Activated CD4-positive, alpha-beta memory T cell treated with anti-CD3 and anti-CD28 coated beads for 36 hours (primary cell): ENCODE measurements at regions of chr3 and their contacts with region 1.

Region 1: DNA sequence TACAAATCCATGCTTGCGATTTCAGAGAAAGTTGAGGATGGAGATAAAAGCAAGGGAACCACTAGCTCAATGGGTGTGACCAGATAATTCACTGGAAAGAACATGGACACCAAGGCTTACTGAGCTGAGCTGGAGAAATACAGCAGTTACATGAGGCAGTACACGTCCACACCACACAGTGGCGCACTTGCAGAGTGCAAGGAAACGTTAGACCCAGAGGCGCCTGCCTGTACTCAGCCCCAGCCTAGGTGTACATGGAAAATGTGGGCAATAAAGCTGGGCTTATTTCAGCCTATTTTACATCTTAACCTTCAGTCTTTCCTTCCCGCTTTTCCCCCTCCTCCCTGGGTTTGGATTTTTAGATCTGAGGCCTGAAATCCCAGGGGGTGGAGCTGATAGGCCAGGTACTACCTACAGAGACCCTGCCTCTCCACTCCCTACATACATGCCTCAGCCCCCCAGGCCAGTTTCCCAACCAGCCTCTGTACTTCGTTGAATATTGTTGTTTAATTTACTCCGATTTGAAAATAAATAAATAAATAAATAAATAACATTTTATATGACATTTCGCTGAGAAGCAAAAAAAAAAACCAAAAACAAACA is 60.1 kb downstream of the PCOLCE2 start:
- DNase-seq: peak; percentile 85
- H3K4me3 Mint-ChIP-seq: no peak overlapping the region
- H3K27ac Mint-ChIP-seq: no peak overlapping the region
- H3K4me1 Mint-ChIP-seq: no peaks in the 10 kb centered on the region
- H3K27me3 Mint-ChIP-seq: peaks cover 13% of the 10 kb centered on the region

Region 2: DNA sequence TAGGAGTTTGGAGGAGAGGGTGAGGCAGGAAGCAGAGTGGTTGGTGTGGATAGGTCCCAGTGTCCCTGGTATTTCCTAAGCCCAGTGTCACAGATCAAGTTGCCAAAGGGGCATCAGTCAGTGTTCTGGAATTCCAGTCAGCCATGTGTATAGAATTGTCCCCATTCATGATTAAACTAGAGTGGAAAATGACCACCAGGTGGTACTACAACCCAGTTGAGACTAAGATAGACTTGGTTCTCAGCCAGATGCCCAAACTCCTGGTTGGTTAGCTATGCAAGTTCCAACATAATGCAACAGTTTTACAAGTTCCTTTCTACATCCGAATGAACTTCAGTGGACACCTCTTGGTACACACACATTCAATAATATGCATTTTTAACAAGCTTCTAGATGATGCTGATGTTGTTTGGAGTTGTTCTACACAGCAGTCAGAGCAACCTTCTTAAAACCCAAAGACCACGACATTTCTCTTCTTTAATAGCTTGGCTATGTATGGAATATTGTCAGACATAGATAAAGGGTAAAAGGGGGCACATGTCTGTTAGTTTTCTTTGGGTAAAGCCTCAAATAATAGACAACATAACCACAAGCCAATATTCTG is 241.9 kb before region 1 on chr3:
- CTCF ChIA-PET with region 1: interaction called, 4 read pairs
- POLR2A ChIA-PET with region 1: no interaction called
- intact Hi-C with region 1: loop called (anchors 2 kb)
- DNase-seq: no peak
- H3K4me3 Mint-ChIP-seq: no peak overlapping the region
- H3K27ac Mint-ChIP-seq: no peak overlapping the region
- H3K4me1 Mint-ChIP-seq: no peaks in the 10 kb centered on the region
- H3K27me3 Mint-ChIP-seq: peaks cover 4% of the 10 kb centered on the region

Region 3: DNA sequence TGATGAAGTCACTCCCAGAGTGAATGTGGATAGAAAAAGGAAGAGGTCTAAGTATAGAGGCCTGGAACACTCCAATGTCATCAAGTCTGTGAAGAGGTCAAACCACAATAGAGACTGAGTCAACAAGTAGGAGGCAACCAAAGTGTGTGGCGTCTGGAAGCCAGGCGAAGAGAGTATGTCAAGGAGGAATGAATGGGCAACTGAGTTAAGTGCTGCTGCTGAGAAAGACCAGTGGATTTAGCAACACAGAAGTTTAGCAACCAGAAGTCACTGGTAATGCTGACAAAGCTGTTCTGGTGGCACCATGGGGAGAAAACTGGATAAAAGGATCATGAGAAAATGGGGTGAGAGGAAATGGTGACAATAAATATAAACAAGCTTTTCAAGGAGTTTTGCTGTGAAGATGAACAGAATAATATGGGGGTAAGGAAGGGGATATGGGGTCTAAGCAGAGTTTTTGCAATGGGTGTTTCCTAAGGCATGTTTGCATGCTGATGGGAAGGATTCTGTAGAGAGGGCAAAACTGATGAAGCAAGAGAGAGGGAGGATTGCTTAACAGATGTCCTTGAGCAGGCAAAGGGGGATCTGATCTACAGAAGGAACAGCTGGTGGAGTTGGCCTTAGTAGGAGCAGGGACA is 21.7 kb after region 1 on chr3:
- CTCF ChIA-PET with region 1: interaction called, 15 read pairs
- POLR2A ChIA-PET with region 1: no interaction called
- intact Hi-C with region 1: no loop called
- DNase-seq: peak; percentile 50
- H3K4me3 Mint-ChIP-seq: no peak overlapping the region
- H3K27ac Mint-ChIP-seq: no peak overlapping the region
- H3K4me1 Mint-ChIP-seq: peaks cover 3% of the 10 kb centered on the region
- H3K27me3 Mint-ChIP-seq: peaks cover 1% of the 10 kb centered on the region

Region 4: GRCh38 chr3:142904639-142905436 is 76.0 kb after region 1 on chr3:
- CTCF ChIA-PET with region 1: interaction called, 12 read pairs
- POLR2A ChIA-PET with region 1: no interaction called
- intact Hi-C with region 1: no loop called
- DNase-seq: no peak
- H3K4me3 Mint-ChIP-seq: no peak overlapping the region
- H3K27ac Mint-ChIP-seq: no peak overlapping the region
- H3K4me1 Mint-ChIP-seq: peaks cover 3% of the 10 kb centered on the region
- H3K27me3 Mint-ChIP-seq: peaks cover 21% of the 10 kb centered on the region

Region 5: GRCh38 chr3:142993958-142994442 is 165.2 kb after region 1 on chr3:
- CTCF ChIA-PET with region 1: interaction called, 27 read pairs
- POLR2A ChIA-PET with region 1: interaction called, 3 read pairs
- intact Hi-C with region 1: loop called (anchors 1 kb)
- DNase-seq: peak; percentile 75
- H3K4me3 Mint-ChIP-seq: no peak overlapping the region
- H3K27ac Mint-ChIP-seq: no peak overlapping the region
- H3K4me1 Mint-ChIP-seq: peaks cover 2% of the 10 kb centered on the region
- H3K27me3 Mint-ChIP-seq: peaks cover 7% of the 10 kb centered on the region